Ovary (tissue), 10 donors: ENCODE measurements at regions of chr2 and their contacts with region 1.

Region 1: DNA sequence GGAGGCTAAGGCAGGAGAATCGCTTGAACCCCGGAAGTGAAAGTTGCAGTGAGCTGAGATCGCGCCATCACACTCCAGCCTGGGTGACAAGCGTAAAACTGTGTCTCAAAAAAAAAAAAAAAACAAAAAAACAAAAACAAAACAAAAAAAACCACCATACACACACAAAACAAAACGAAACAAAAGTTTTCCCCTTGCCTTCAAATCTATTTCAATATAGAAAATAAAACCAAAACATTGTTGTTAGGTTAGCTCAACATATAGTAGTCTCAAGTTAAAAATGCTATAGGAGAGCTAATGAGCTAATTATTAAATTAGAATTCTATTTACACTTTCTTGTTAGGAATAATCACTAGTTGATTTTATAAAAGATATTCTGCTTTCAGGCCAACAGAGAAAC is 43.3 kb downstream of the FBXO11 start:
- DNase-seq: no peak
- H3K4me3 ChIP-seq: no peak overlapping the region
- H3K27ac ChIP-seq: no peak overlapping the region
- H3K4me1 ChIP-seq: peaks cover 8% of the 10 kb centered on the region
- H3K27me3 ChIP-seq: no peaks in the 10 kb centered on the region
- CTCF ChIP-seq: no peak
- EP300 ChIP-seq: no peak
- POLR2A ChIP-seq: no peak

Region 2: GRCh38 chr2:47327295-47327694 is 535.7 kb before region 1 on chr2:
- intact Hi-C with region 1: no loop called
- DNase-seq: no peak
- H3K4me3 ChIP-seq: no peak overlapping the region
- H3K27ac ChIP-seq: no peak overlapping the region
- H3K4me1 ChIP-seq: peaks cover 4% of the 10 kb centered on the region
- H3K27me3 ChIP-seq: no peaks in the 10 kb centered on the region
- CTCF ChIP-seq: no peak
- EP300 ChIP-seq: no peak
- POLR2A ChIP-seq: no peak

Region 3: DNA sequence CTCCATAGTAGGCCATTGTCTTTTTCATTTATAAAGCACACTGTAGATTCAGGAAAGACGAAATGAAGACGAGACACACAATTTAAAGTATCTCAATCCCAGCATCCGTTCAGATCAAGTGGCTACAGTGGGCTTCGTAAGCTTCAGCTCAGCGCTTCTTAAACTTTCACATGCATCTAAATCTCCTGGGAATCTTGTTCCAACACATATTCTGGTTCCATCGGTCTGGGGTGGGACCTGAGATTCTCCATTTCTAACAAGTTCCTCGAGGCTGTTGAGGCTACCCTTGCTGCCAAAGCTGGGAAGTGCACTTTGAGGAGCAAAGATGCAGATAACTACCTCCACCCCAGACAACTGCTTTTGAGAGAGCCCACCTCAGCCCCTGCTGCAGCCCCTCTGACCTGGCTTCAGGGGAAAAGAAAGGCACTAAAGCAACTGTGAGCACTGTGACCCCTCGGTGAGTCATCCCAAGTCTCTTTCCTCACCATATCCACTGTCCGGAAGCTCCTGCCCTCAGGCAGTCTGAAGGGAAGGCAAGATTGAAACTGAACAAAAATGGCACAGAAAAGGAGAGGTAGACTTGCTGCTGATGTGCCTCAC is 244.5 kb after region 1 on chr2:
- intact Hi-C with region 1: loop called in 1 of 4 experiments (anchors 5 kb)
- DNase-seq: peak in 1 of 5 donors; percentile 15
- H3K4me3 ChIP-seq: no peak overlapping the region
- H3K27ac ChIP-seq: no peak overlapping the region
- H3K4me1 ChIP-seq: no peaks in the 10 kb centered on the region
- H3K27me3 ChIP-seq: no peaks in the 10 kb centered on the region
- CTCF ChIP-seq: no peak
- EP300 ChIP-seq: no peak
- POLR2A ChIP-seq: no peak